AG04450 (cell line): ENCODE measurements at regions of chr12 and their contacts with region 1.

Region 1: GRCh38 chr12:118082161-118082560 is 21.2 kb upstream of the WSB2 start:
- DNase-seq: no peak
- H3K4me3 ChIP-seq: no peak overlapping the region
- H3K27ac ChIP-seq: no peak overlapping the region
- H3K27me3 ChIP-seq: no peaks in the 10 kb centered on the region
- CTCF ChIP-seq: no peak

Region 2: DNA sequence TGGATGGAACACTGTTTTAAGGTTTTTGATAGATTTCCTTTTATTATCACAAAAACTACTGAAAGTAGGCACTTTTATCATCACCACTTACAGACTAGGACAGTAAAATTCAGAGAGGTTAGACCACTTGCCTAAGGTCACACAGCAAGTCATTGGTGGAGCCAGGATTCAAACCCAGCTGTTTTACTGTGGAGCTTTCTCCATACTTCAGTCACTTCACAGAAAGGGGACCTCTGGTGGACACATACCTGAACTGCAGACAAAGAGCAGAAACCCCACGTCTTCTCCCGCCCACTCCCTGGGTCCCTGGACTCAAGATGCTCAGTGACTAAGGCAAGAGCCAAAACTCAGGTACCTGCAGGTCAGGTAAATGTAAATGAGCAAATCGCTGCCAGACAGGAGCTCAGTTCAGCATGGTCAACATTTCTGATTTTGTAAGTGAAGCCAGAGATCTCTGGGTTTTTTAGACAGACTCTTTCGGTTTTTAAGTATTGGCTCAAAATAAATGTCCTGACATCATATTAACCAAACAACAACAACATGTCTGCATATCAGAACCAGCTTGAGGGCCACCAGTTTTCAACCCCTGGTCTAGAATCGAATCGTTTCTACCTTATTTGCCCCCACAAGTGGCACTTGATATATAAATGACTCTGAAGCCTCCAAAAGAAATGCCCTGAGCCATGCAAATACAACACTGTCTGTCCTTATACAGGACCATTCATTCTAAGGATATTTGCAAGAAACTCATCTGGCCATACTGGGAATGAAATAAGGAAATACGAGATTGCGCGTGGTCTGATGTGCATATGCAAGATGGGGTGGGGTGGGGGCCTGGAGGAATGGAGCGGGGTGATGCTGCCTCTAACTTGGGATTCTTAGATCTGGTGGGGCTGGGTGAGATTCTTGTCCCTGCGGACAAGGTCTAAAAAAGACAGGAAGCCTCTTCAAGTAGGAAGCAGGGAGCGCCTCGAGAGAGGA is 224.2 kb before region 1 on chr12:
- CTCF ChIA-PET with region 1: interaction called, 12 read pairs
- POLR2A ChIA-PET with region 1: no interaction called
- DNase-seq: no peak
- H3K4me3 ChIP-seq: no peak overlapping the region
- H3K27ac ChIP-seq: no peak overlapping the region
- H3K27me3 ChIP-seq: no peaks in the 10 kb centered on the region
- CTCF ChIP-seq: peak; percentile 52